ENCODE measurements at regions of chr20 and their contacts with region 1.

Region 1: GRCh38 chr20:43728044-43728529 is 1.3 kb upstream of the GTSF1L start:
- DNase-seq: peak; percentile 58
- ATAC-seq: peak; percentile 69
- H3K4me3 ChIP-seq: no peak overlapping the region
- H3K27ac ChIP-seq: no peak overlapping the region
- H3K4me1 ChIP-seq: peaks cover 11% of the 10 kb centered on the region
- H3K27me3 ChIP-seq: no peaks in the 10 kb centered on the region
- CTCF ChIP-seq: no peak
- EP300 ChIP-seq: 0 out of 4 replicates have a peak, but pooled peaks of 1 of the 2 experiments have one; percentile 14
- POLR2A ChIP-seq: no peak
- RAD21 ChIP-seq: no peak

Region 2: DNA sequence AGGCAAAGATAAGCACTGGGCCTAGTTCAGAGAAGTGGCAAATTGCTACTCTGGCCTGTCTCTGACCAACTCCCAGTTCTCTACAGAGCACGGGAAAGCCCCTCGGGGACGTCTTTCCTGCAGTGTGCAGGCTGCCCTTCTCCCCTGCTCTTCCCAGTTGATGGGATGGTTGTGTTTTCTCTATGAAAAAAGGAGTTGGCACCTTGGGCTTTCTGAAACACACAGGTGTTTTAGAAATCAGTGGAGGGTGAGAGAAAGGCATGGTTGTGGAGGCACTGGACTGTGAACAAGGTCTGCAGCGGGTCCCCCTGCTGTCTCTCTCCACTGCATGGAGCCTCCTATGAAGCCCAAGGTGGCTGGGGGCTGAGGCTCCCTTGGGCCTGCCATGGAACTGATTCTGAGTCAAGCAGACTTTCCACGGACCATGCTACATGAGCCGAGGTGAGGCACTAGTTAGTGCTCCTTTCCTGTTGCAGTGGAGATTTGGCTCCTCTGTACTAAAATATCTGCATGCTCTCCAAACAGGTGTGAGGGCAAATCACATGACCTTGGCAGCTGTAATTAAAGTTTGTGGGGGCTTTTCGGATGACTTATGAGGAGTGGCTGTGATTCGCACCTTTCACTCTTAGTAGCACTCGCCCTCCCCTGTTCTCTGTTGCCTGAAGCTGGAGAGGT is 17.6 kb before region 1 on chr20:
- CTCF ChIA-PET with region 1: interaction called, 8 read pairs
- POLR2A ChIA-PET with region 1: interaction called, 4 read pairs
- RAD21 ChIA-PET with region 1: interaction called, 7 read pairs
- SMC1A ChIA-PET with region 1: interaction called, 12 read pairs
- in situ Hi-C with region 1: no loop called
- intact Hi-C with region 1: no loop called
- DNase-seq: peak; percentile 59
- ATAC-seq: peak; percentile 85
- H3K4me3 ChIP-seq: no peak overlapping the region
- H3K27ac ChIP-seq: peak overlapping the region; percentile 74
- H3K4me1 ChIP-seq: peaks cover 30% of the 10 kb centered on the region
- H3K27me3 ChIP-seq: no peaks in the 10 kb centered on the region
- CTCF ChIP-seq: no peak
- EP300 ChIP-seq: peak in 1 of 2 experiments; percentile 76; a peak in 2 of 4 replicates
- POLR2A ChIP-seq: no peak
- RAD21 ChIP-seq: no peak

Region 3: DNA sequence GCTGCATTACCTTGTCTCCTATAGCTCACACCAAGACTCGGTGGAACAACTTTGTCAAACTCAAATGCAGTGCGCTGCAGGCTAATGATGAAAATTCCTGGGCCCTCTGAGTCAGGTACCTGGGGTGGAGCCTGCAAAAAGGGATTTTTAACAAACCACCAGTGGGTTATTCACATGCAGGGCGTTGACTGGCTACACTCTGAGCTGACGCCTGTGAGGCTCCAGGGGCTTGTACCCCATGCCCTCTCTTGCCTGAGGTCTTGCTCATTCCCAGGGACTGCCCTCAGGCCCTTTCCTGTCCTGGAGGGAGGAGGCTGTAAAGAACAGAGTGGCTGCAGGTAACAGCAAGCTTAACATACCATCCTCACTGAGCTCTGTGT is 10.5 kb before region 1 on chr20:
- CTCF ChIA-PET with region 1: no interaction called
- POLR2A ChIA-PET with region 1: interaction called, 3 read pairs
- RAD21 ChIA-PET with region 1: no interaction called
- SMC1A ChIA-PET with region 1: interaction called, 10 read pairs
- in situ Hi-C with region 1: no loop called
- intact Hi-C with region 1: no loop called
- DNase-seq: no peak
- ATAC-seq: no peak
- H3K4me3 ChIP-seq: no peak overlapping the region
- H3K27ac ChIP-seq: no peak overlapping the region
- H3K4me1 ChIP-seq: peaks cover 4% of the 10 kb centered on the region; the same call in 1 of the 2 replicates
- H3K27me3 ChIP-seq: no peaks in the 10 kb centered on the region
- CTCF ChIP-seq: no peak
- EP300 ChIP-seq: no peak
- POLR2A ChIP-seq: no peak
- RAD21 ChIP-seq: no peak